Lower leg skin (tissue), 4 donors: ENCODE measurements at regions of chr5 and their contacts with region 1.

Region 1: GRCh38 chr5:57209351-57210040 is 35.6 kb downstream of the GPBP1 start:
- DNase-seq: no peak
- H3K4me3 ChIP-seq: no peak overlapping the region
- CTCF ChIP-seq: no peak
- POLR2A ChIP-seq: no peak

Region 2: GRCh38 chr5:56909294-56910209 is 299.9 kb before region 1 on chr5 and contains the start of gene SETD9:
- intact Hi-C with region 1: loop called (anchors 10 kb)
- DNase-seq: peak; percentile 96 to 99
- H3K4me3 ChIP-seq: peak within 1 kb of the TSS; percentile 50
- CTCF ChIP-seq: no peak
- POLR2A ChIP-seq: no peak
- total RNA-seq, gene SETD9: 9.0 to 24.4 (median 17.6) TPM

Region 3: DNA sequence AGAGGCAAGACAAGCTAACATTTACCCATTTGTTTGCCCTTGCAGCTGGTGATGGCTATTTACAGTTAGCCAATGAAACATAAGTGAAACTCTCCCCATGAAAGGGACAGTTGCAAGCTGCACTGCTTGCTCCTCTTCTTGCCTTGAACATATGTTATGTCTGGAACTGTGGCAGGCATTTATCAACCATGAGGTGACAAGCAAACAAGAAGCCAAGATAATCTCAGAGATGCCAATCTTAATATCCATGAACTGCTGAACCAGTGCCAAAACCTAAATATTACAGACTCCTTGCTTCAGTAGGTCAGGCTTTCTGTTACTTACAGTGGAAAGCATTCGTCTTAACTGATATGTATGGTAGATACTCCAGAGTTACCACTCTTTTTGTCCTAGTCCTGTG is 139.7 kb after region 1 on chr5:
- intact Hi-C with region 1: no loop called
- DNase-seq: no peak
- H3K4me3 ChIP-seq: no peak overlapping the region
- CTCF ChIP-seq: no peak
- POLR2A ChIP-seq: no peak

Region 4: GRCh38 chr5:58999804-59000595 is 1790.5 kb after region 1 on chr5:
- intact Hi-C with region 1: no loop called
- DNase-seq: no peak
- H3K4me3 ChIP-seq: no peak overlapping the region
- CTCF ChIP-seq: no peak
- POLR2A ChIP-seq: no peak